K562 (cell line): ENCODE measurements at regions of chr6 and their contacts with region 1.

Region 1: DNA sequence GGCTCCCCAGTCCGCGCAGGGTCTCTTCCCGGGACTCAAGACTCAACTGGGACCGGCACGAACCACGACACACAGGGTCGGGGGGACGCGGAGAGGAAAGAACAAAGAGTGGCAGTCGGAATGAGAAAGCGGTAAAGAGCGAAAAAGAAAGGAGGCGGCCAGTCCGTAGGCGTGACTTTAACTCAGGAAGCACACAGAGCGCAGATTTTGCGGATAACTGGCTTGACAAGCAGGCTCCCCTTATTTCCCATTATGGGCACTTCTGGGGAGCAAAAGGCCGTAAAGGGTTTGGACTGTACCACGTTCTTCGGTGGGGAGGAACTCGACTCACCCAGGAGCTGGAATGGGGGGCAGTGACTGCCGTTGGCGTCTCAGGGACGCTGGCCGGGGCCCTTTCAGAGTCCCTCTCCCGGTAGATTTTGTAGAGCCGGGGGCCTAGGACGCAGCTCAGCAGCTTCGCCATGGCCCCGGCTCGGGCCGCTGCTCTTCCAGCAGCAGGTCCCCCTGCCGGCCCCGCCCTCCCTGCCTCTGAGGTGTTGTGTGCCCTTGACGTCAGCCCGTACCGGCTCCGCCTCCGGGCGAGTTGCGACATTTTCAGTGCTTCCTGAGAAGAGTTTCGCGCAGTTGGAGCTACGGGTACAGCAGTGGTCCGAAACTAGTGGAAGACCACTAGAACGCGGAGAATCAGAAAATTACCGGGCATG is at the start of gene ABHD16A:
- DNase-seq: peak; percentile 100
- ATAC-seq: peak; percentile 95
- H3K4me3 ChIP-seq: peak within 1 kb of the TSS; percentile 68
- H3K27ac ChIP-seq: peak within 1 kb of the TSS; percentile 93
- H3K4me1 ChIP-seq: peaks cover 22 to 34% of the 10 kb centered on the region in 2 experiments
- H3K27me3 ChIP-seq: no peaks in the 10 kb centered on the region
- CTCF ChIP-seq: peak in 2 of 3 experiments; percentile 14 to 17; a peak in 1 of 6 replicates
- EP300 ChIP-seq: peak; percentile 73
- POLR2A ChIP-seq: peak; percentile 98
- RAD21 ChIP-seq: peak in 1 of 2 experiments; percentile 21; a peak in 1 of 4 replicates
- polyA plus RNA-seq, gene ABHD16A: 25.8 to 49.7 TPM

Region 2: DNA sequence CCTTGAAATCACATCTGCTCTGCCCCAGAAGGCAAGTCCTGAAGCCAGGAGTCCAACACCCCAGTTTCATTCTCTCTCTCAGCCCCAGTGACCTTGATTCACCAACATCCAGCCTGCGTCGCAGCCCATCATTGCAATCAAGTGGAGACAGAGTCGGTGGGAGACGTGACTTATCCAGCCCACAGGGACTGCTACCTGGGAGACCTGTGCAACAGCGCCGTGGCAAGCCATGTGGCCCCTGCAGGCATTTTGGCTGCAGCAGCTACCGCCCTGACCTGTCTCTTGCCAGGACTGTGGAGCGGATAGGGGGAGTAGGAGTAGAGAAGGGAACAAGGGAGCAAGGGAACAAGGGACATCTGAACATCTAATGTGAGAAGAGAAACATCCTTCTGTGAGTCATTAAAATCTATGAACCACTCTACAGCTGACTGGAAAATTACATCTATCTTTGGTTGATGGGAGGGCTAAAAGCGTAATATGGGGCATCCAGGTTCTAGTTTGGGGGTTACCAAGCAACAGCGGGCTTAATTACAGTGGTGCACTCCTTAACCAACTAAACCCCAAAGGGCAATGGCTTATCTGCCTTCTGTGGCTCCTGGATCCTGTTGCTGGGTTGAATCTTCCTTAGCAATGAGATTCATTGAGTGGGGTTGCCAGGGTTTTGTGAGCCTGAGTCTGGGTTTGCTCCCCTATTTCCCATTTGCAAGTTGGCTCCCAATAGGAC is 14.7 kb after region 1 on chr6:
- CTCF ChIA-PET with region 1: no interaction called
- POLR2A ChIA-PET with region 1: interaction called, 223 read pairs
- in situ Hi-C with region 1: no loop called
- intact Hi-C with region 1: no loop called
- DNase-seq: peak; percentile 85 to 90 (median 86)
- ATAC-seq: peak; percentile 91
- H3K4me3 ChIP-seq: no peak overlapping the region
- H3K27ac ChIP-seq: no peak overlapping the region
- H3K4me1 ChIP-seq: peaks cover 19 to 20% of the 10 kb centered on the region in 2 experiments
- H3K27me3 ChIP-seq: no peaks in the 10 kb centered on the region
- CTCF ChIP-seq: peak; percentile 81 to 93 (median 90)
- EP300 ChIP-seq: no peak
- POLR2A ChIP-seq: no peak
- RAD21 ChIP-seq: peak; percentile 22 to 55; a peak in 3 of 4 replicates

Region 3: GRCh38 chr6:31723245-31723979 is 20.4 kb after region 1 on chr6 and contains the start of gene MPIG6B:
- CTCF ChIA-PET with region 1: no interaction called
- POLR2A ChIA-PET with region 1: interaction called, 223 read pairs
- in situ Hi-C with region 1: no loop called
- intact Hi-C with region 1: no loop called
- DNase-seq: peak in 2 of 4 experiments; percentile 58 to 71
- ATAC-seq: peak; percentile 5; the same call in 2 of the 3 replicates
- H3K4me3 ChIP-seq: no peak within 1 kb of the TSS
- H3K27ac ChIP-seq: no peak within 1 kb of the TSS
- H3K4me1 ChIP-seq: peaks cover 35 to 46% of the 10 kb centered on the region in 2 experiments
- H3K27me3 ChIP-seq: no peaks in the 10 kb centered on the region
- CTCF ChIP-seq: no peak
- EP300 ChIP-seq: no peak
- POLR2A ChIP-seq: no peak
- RAD21 ChIP-seq: no peak
- polyA plus RNA-seq, gene MPIG6B: 0.15 to 0.32 TPM